Calu3 (cell line): ENCODE measurements at regions of chrX and their contacts with region 1.

Region 1: GRCh38 chrX:48083212-48083611 is 11.8 kb upstream of the ZNF630 start:
- DNase-seq: peak; percentile 52
- H3K4me3 Mint-ChIP-seq: no peak overlapping the region
- H3K27ac Mint-ChIP-seq: no peak overlapping the region
- H3K4me1 Mint-ChIP-seq: peaks cover 19% of the 10 kb centered on the region
- H3K27me3 Mint-ChIP-seq: no peaks in the 10 kb centered on the region
- CTCF ChIP-seq: peak; percentile 33

Region 2: GRCh38 chrX:48493890-48494364 is 410.7 kb after region 1 on chrX:
- CTCF ChIA-PET with region 1: interaction called, 10 read pairs
- intact Hi-C with region 1: loop called (anchors 1 kb)
- DNase-seq: peak; percentile 48
- H3K4me3 Mint-ChIP-seq: no peak overlapping the region
- H3K27ac Mint-ChIP-seq: no peak overlapping the region
- H3K4me1 Mint-ChIP-seq: peaks cover 32% of the 10 kb centered on the region
- H3K27me3 Mint-ChIP-seq: no peaks in the 10 kb centered on the region
- CTCF ChIP-seq: peak; percentile 27

Region 3: GRCh38 chrX:48511561-48511960 is 428.3 kb after region 1 on chrX:
- CTCF ChIA-PET with region 1: no interaction called
- intact Hi-C with region 1: loop called (anchors 5 kb)
- DNase-seq: peak; percentile 47
- H3K4me3 Mint-ChIP-seq: no peak overlapping the region
- H3K27ac Mint-ChIP-seq: no peak overlapping the region
- H3K4me1 Mint-ChIP-seq: peaks cover 17% of the 10 kb centered on the region
- H3K27me3 Mint-ChIP-seq: no peaks in the 10 kb centered on the region
- CTCF ChIP-seq: peak; percentile 31

Region 4: DNA sequence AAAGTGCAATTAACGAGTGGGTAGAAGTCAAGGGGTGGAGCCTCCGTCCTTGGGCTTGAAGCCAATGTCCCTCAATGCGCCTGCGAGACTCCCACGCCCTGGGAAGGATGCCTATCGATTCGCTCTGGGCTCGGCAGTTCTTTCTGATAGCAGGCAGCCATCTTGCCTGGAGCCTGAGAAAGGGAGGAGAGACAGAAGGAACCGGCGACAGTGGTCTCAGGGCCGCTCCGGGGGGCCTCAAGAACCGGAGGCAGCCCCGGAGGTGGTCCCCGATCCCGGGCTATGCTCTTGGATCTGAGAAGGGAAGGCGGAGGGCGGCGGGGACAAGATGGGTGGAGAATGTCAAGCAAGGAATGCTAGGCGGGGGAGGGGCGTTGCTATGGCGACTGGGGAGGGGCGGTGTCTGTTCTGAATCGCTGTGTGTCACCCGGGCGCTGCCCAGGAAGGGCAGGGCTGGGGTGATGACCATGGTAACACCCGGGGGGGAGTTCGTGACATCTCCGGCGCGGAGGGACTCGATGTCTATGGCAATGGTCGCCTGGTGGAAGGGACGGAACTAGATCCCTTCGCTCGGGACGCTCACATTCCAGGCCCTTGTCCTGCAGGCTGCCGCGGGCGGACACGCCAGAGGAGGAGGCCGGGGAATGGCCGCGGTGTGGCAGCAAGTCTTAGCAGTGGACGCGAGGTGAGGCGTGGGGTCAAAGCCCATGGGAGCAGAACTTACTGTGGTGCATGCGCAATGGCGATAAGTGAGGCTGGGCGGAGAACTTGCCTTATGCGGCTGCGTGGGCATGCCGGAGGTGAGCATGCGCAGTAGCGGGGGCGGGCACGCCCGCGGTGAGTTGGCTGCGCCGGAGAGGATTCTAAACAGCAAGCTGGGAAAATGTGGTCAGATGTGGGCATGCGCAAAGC is 514.4 kb after region 1 on chrX and contains the start of gene WDR13:
- CTCF ChIA-PET with region 1: no interaction called
- intact Hi-C with region 1: loop called (anchors 10 kb)
- DNase-seq: peak; percentile 94
- H3K4me3 Mint-ChIP-seq: peak within 1 kb of the TSS; percentile 96
- H3K27ac Mint-ChIP-seq: peak within 1 kb of the TSS; percentile 99
- H3K4me1 Mint-ChIP-seq: no peaks in the 10 kb centered on the region
- H3K27me3 Mint-ChIP-seq: no peaks in the 10 kb centered on the region
- CTCF ChIP-seq: no peak
- total RNA-seq, gene WDR13: 68.4 and 81.2 TPM in 2 replicates